ENCODE measurements at regions of chr19 and their contacts with region 1.

Region 1: GRCh38 chr19:40777937-40778705 is at the start of gene RAB4B:
- DNase-seq: peak; percentile 99
- ATAC-seq: peak; percentile 88
- H3K4me3 ChIP-seq: peak within 1 kb of the TSS; percentile 70 to 88 (median 81)
- H3K27ac ChIP-seq: peak within 1 kb of the TSS; percentile 97
- H3K4me1 ChIP-seq: peaks cover 31% of the 10 kb centered on the region
- H3K27me3 ChIP-seq: no peaks in the 10 kb centered on the region; a peak in 1 of 5 replicates
- CTCF ChIP-seq: no peak; the same call in 1 of the 2 replicates
- EP300 ChIP-seq: no peak
- POLR2A ChIP-seq: peak; percentile 1 to 45
- RAD21 ChIP-seq: 0 out of 2 replicates have a peak, but pooled peaks have one; percentile 11
- total RNA-seq, gene RAB4B: 2.2 and 3.3 TPM in 2 replicates

Region 2: GRCh38 chr19:40716655-40717324 is 61.3 kb before region 1 on chr19 and contains the starts of genes COQ8B and ITPKC:
- CTCF ChIA-PET with region 1: no interaction called
- POLR2A ChIA-PET with region 1: interaction called, 18 read pairs
- in situ Hi-C with region 1: no loop called
- intact Hi-C with region 1: no loop called
- DNase-seq: peak; percentile 95
- ATAC-seq: peak; percentile 64
- H3K4me3 ChIP-seq: peak within 1 kb of the TSS; percentile 90 to 99 (median 92)
- H3K27ac ChIP-seq: peak within 1 kb of the TSS; percentile 95
- H3K4me1 ChIP-seq: peaks cover 45% of the 10 kb centered on the region
- H3K27me3 ChIP-seq: no peaks in the 10 kb centered on the region; a peak in 1 of 5 replicates
- CTCF ChIP-seq: no peak
- EP300 ChIP-seq: no peak
- POLR2A ChIP-seq: peak; percentile 64 to 73; a peak in 3 of 4 replicates
- RAD21 ChIP-seq: peak; percentile 53; the same call in 1 of the 2 replicates
- total RNA-seq, gene COQ8B: 10.3 and 17.2 TPM in 2 replicates
- total RNA-seq, gene ITPKC: 11.2 and 11.3 TPM in 2 replicates

Region 3: DNA sequence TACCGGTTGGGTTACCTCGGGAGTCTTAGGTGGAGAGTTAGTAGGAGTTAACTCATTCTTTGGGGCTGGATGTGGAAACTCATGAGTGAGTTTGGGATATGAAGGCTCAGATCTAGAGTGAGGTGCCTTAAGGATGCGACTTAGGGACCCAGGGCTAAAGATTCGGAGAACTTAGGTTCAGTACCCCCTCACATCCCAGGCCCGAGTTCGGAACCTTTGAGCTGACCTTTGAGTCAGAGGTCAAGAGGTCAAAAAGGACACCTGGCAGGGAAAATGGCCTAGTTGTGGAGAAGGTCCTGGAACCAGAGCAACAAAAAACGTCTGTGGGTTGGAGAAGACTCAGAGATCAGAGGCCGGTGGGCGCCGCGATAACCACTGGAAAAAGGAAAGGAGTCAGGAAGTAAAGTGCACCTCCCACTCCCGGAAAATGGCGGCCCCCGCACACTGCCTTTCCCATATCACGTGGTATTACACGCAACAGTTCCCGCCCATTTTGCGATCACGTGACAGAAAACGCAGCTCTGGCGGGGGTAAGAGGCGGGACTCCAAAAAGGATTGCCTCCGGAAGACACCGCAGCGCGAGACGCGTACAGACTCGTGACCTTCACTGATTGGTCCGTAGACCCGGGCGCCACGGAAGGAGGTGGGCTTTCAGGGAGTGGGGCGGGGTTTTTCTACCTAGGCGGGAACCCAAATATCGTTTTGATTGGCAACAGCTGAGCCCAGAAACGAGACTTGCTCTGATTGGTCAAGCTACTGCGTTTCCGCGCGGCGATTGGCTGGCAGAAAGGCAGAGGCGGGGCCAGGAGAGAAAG is 27.9 kb before region 1 on chr19 and contains the start of gene ACTMAP:
- CTCF ChIA-PET with region 1: no interaction called
- POLR2A ChIA-PET with region 1: interaction called, 90 read pairs
- in situ Hi-C with region 1: no loop called
- intact Hi-C with region 1: no loop called
- DNase-seq: peak; percentile 99
- ATAC-seq: peak; percentile 87
- H3K4me3 ChIP-seq: peak within 1 kb of the TSS; percentile 73 to 89 (median 74)
- H3K27ac ChIP-seq: peak within 1 kb of the TSS; percentile 95
- H3K4me1 ChIP-seq: peaks cover 68% of the 10 kb centered on the region
- H3K27me3 ChIP-seq: no peaks in the 10 kb centered on the region; a peak in 1 of 5 replicates
- CTCF ChIP-seq: no peak
- EP300 ChIP-seq: no peak
- POLR2A ChIP-seq: peak in 1 of 2 experiments; percentile 65; a peak in 3 of 4 replicates
- RAD21 ChIP-seq: peak; percentile 11; the same call in 1 of the 2 replicates
- total RNA-seq, gene ACTMAP: 2.2 and 3.9 TPM in 2 replicates

Region 4: GRCh38 chr19:40762754-40763470 is 15.2 kb before region 1 on chr19:
- CTCF ChIA-PET with region 1: no interaction called
- POLR2A ChIA-PET with region 1: interaction called, 90 read pairs
- in situ Hi-C with region 1: no loop called
- intact Hi-C with region 1: no loop called
- DNase-seq: no peak
- ATAC-seq: no peak
- H3K4me3 ChIP-seq: no peak overlapping the region
- H3K27ac ChIP-seq: no peak overlapping the region
- H3K4me1 ChIP-seq: no peaks in the 10 kb centered on the region
- H3K27me3 ChIP-seq: no peaks in the 10 kb centered on the region
- CTCF ChIP-seq: no peak
- EP300 ChIP-seq: no peak
- POLR2A ChIP-seq: no peak
- RAD21 ChIP-seq: no peak

Region 5: GRCh38 chr19:40798223-40798996 is 20.3 kb after region 1 on chr19:
- CTCF ChIA-PET with region 1: no interaction called
- POLR2A ChIA-PET with region 1: interaction called, 67 read pairs
- in situ Hi-C with region 1: no loop called
- intact Hi-C with region 1: loop called (anchors 1 kb)
- DNase-seq: peak; percentile 99
- ATAC-seq: peak; percentile 92
- H3K4me3 ChIP-seq: peak overlapping the region; percentile 59 to 93 (median 65)
- H3K27ac ChIP-seq: peak overlapping the region; percentile 98
- H3K4me1 ChIP-seq: peaks cover 49% of the 10 kb centered on the region
- H3K27me3 ChIP-seq: no peaks in the 10 kb centered on the region; a peak in 1 of 5 replicates
- CTCF ChIP-seq: peak; percentile 89
- EP300 ChIP-seq: no peak
- POLR2A ChIP-seq: peak; percentile 67 to 94
- RAD21 ChIP-seq: peak; percentile 83

Region 6: GRCh38 chr19:40897962-40898361 is 119.8 kb after region 1 on chr19:
- CTCF ChIA-PET with region 1: no interaction called
- POLR2A ChIA-PET with region 1: no interaction called
- in situ Hi-C with region 1: no loop called
- intact Hi-C with region 1: no loop called
- DNase-seq: no peak
- ATAC-seq: no peak
- H3K4me3 ChIP-seq: no peak overlapping the region
- H3K27ac ChIP-seq: no peak overlapping the region
- H3K4me1 ChIP-seq: peaks cover 12% of the 10 kb centered on the region
- H3K27me3 ChIP-seq: peaks cover 0 to 31% of the 10 kb centered on the region in 2 experiments; a peak in 1 of 5 replicates
- CTCF ChIP-seq: no peak
- EP300 ChIP-seq: no peak
- POLR2A ChIP-seq: no peak
- RAD21 ChIP-seq: no peak